H1 (cell line): ENCODE measurements at regions of chr13 and their contacts with region 1.

Region 1: GRCh38 chr13:30802953-30803478 is 67.7 kb downstream of the ALOX5AP start:
- DNase-seq: peak; percentile 56 to 93
- H3K4me3 ChIP-seq: peak overlapping the region in 1 of 4 experiments; percentile 28; a peak in 2 of 8 replicates
- H3K27ac ChIP-seq: no peak overlapping the region
- H3K4me1 ChIP-seq: peaks cover 0 to 5% (median 2%) of the 10 kb centered on the region in 4 experiments; a peak in 4 of 7 replicates
- H3K27me3 ChIP-seq: peaks cover 0 to 3% (median 0%) of the 10 kb centered on the region in 4 experiments; a peak in 1 of 7 replicates
- CTCF ChIP-seq: peak; percentile 83 to 94 (median 91)
- EP300 ChIP-seq: peak in 1 of 2 experiments; percentile 25; a peak in 1 of 3 replicates
- POLR2A ChIP-seq: no peak
- RAD21 ChIP-seq: peak; percentile 95 to 98

Region 2: GRCh38 chr13:30659980-30660379 is 143.0 kb before region 1 on chr13:
- CTCF ChIA-PET with region 1: interaction called, 19 read pairs
- POLR2A ChIA-PET with region 1: no interaction called
- DNase-seq: no peak
- H3K4me3 ChIP-seq: no peak overlapping the region
- H3K27ac ChIP-seq: no peak overlapping the region
- H3K4me1 ChIP-seq: peaks cover 0 to 6% (median 1%) of the 10 kb centered on the region in 4 experiments; a peak in 3 of 7 replicates
- H3K27me3 ChIP-seq: no peaks in the 10 kb centered on the region
- CTCF ChIP-seq: no peak
- EP300 ChIP-seq: no peak
- POLR2A ChIP-seq: no peak
- RAD21 ChIP-seq: no peak

Region 3: GRCh38 chr13:30792285-30793000 is 10.6 kb before region 1 on chr13:
- CTCF ChIA-PET with region 1: interaction called, 29 read pairs
- POLR2A ChIA-PET with region 1: no interaction called
- DNase-seq: no peak
- H3K4me3 ChIP-seq: no peak overlapping the region
- H3K27ac ChIP-seq: no peak overlapping the region
- H3K4me1 ChIP-seq: peaks cover 0 to 3% (median 1%) of the 10 kb centered on the region in 4 experiments; a peak in 2 of 7 replicates
- H3K27me3 ChIP-seq: 0 out of 7 replicates have a peak, but pooled peaks cover 0 to 2% (median 0%) of the 10 kb centered on the region in 4 experiments
- CTCF ChIP-seq: no peak
- EP300 ChIP-seq: no peak
- POLR2A ChIP-seq: no peak
- RAD21 ChIP-seq: no peak; a peak in 1 of 4 replicates

Region 4: GRCh38 chr13:30857018-30857417 is 54.0 kb after region 1 on chr13:
- CTCF ChIA-PET with region 1: interaction called, 10 read pairs
- POLR2A ChIA-PET with region 1: no interaction called
- DNase-seq: no peak
- H3K4me3 ChIP-seq: no peak overlapping the region
- H3K27ac ChIP-seq: no peak overlapping the region
- H3K4me1 ChIP-seq: no peaks in the 10 kb centered on the region
- H3K27me3 ChIP-seq: peaks cover 0 to 6% (median under 1%) of the 10 kb centered on the region in 4 experiments; a peak in 4 of 7 replicates
- CTCF ChIP-seq: no peak
- EP300 ChIP-seq: no peak
- POLR2A ChIP-seq: no peak
- RAD21 ChIP-seq: no peak; a peak in 1 of 4 replicates

Region 5: DNA sequence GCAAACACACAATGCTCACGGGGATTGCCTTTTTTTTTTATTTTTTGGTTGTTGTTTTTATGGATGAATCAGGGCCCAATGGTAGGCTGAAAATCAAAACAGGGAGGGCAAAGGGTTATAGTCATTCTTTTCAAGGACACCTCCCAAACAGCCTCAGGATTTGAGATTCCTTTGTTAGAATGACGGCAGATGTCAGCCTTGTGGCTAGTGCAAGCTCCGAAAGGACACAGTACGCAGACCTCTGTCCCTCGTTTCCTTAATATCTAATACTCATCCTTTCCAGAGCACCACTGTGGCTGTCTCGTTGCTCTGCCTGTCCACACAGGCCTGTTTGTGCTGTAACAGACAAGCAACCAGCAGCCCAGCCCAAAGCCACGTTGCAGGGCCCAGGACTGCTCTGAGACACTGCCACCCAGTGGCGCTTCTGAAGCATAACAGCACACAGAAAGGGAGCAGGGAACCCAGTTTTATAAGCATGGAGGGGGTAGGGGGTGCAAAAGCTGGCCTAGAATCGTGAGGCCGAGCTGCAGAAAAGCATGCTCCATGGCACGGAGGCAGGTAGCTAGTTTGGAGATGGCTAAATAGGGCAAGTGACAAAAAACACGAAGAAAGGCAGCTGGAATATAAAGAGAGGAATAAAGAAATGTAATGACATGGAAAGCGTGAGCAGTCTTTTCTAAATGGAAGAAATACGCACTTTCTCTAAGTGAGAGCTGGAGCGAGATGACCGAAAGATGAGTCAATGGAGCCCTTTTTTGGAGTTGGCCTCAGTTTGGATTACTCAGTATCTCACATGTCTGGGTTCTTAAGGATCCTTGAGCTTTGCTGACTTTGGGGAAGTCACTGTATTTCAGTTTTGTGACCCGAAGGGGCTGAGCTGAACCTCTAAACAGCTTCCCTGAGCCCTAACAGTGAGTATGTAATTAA is 62.4 kb after region 1 on chr13:
- CTCF ChIA-PET with region 1: interaction called, 21 read pairs
- POLR2A ChIA-PET with region 1: interaction called, 4 read pairs
- DNase-seq: peak; percentile 70 to 72
- H3K4me3 ChIP-seq: peak overlapping the region in 1 of 4 experiments; percentile 56; a peak in 3 of 8 replicates
- H3K27ac ChIP-seq: no peak overlapping the region
- H3K4me1 ChIP-seq: peaks cover 12 to 31% (median 15%) of the 10 kb centered on the region in 4 experiments
- H3K27me3 ChIP-seq: peaks cover 0 to 7% (median 3%) of the 10 kb centered on the region in 4 experiments; a peak in 4 of 7 replicates
- CTCF ChIP-seq: peak; percentile 88 to 94 (median 93)
- EP300 ChIP-seq: no peak
- POLR2A ChIP-seq: peak in 1 of 2 experiments; percentile 54; a peak in 1 of 3 replicates
- RAD21 ChIP-seq: peak; percentile 91 to 95